ENCODE measurements at regions of chr15 and their contacts with region 1.

Region 1: GRCh38 chr15:101258238-101259144 is 6.6 kb upstream of the CHSY1 start:
- DNase-seq: peak; percentile 87
- H3K4me3 Mint-ChIP-seq: no peak overlapping the region
- H3K27ac Mint-ChIP-seq: no peak overlapping the region
- H3K4me1 Mint-ChIP-seq: peaks cover 25% of the 10 kb centered on the region
- H3K27me3 Mint-ChIP-seq: peaks cover 19% of the 10 kb centered on the region

Region 2: GRCh38 chr15:100918034-100918689 is 340.3 kb before region 1 on chr15:
- intact Hi-C with region 1: loop called (anchors 5 kb)
- DNase-seq: peak; percentile 92
- H3K4me3 Mint-ChIP-seq: peak overlapping the region; percentile 77
- H3K27ac Mint-ChIP-seq: no peak overlapping the region
- H3K4me1 Mint-ChIP-seq: peaks cover 20% of the 10 kb centered on the region
- H3K27me3 Mint-ChIP-seq: peaks cover 68% of the 10 kb centered on the region

Region 3: GRCh38 chr15:101014921-101015841 is 243.3 kb before region 1 on chr15:
- intact Hi-C with region 1: loop called (anchors 1 kb)
- DNase-seq: peak; percentile 91
- H3K4me3 Mint-ChIP-seq: no peak overlapping the region
- H3K27ac Mint-ChIP-seq: no peak overlapping the region
- H3K4me1 Mint-ChIP-seq: peaks cover 2% of the 10 kb centered on the region
- H3K27me3 Mint-ChIP-seq: peaks cover 5% of the 10 kb centered on the region

Region 4: GRCh38 chr15:101088788-101089583 is 169.5 kb before region 1 on chr15:
- intact Hi-C with region 1: loop called (anchors 1 kb)
- DNase-seq: peak; percentile 95
- H3K4me3 Mint-ChIP-seq: no peak overlapping the region
- H3K27ac Mint-ChIP-seq: no peak overlapping the region
- H3K4me1 Mint-ChIP-seq: peaks cover 9% of the 10 kb centered on the region
- H3K27me3 Mint-ChIP-seq: peaks cover under 1% of the 10 kb centered on the region

Region 5: DNA sequence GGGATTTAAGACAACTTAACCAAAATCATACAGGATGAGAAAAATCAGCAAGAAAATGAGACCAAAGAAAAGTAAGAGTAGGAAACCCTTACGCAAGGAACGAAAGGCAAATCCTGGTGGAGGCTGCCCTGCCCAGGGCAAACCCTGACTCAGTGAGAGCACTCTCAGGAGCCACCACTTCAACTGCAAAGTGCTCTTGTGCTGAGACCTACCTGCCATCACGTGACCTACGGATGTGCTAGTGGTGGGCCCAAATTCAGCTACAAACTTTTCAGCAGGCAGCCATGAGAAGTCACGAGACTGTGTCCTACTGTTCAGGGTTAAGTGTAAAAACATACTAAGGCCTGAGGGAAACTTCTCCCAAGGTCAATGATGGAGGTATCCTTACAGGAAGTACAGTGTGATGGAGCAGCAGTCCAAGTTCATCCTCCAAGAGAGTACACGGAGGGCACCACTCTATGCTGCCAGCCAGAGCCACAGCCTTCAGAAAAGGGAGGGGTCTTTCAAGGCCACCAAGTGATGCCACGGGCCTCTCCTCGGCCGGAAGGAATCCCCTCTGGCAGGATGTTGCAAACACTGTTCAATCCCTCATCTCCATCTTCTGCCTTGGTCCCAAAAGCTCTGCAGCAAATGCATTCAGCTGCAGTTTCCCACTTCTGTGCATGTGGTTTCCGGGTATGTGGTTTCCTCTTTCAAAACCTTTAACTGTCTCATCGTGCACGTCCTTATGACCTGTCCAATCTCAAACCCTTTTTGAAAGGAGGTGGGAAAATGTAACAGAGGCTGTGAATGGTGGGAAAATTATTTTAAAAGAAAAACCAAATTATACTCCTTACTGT is 16.1 kb before region 1 on chr15:
- intact Hi-C with region 1: no loop called
- DNase-seq: peak; percentile 91
- H3K4me3 Mint-ChIP-seq: peak overlapping the region; percentile 70
- H3K27ac Mint-ChIP-seq: peak overlapping the region; percentile 90
- H3K4me1 Mint-ChIP-seq: peaks cover 83% of the 10 kb centered on the region
- H3K27me3 Mint-ChIP-seq: no peaks in the 10 kb centered on the region

Measured in activated CD4-positive, alpha-beta T cell treated with anti-CD3 and anti-CD28 coated beads, Interleukin-2, amount 10 ng/mL, durations not matched to agents 24 days and 14 days (primary cell).